Activated naive CD4-positive, alpha-beta T cell treated with anti-CD3 and anti-CD28 coated beads for 36 hours (primary cell): ENCODE measurements at regions of chr11 and their contacts with region 1.

Region 1: GRCh38 chr11:13289081-13289480 is 11.5 kb downstream of the BMAL1 start:
- DNase-seq: no peak
- H3K4me3 Mint-ChIP-seq: no peak overlapping the region
- H3K27ac Mint-ChIP-seq: no peak overlapping the region
- H3K4me1 Mint-ChIP-seq: peaks cover 76% of the 10 kb centered on the region
- H3K27me3 Mint-ChIP-seq: no peaks in the 10 kb centered on the region

Region 2: GRCh38 chr11:12813371-12814225 is 475.5 kb before region 1 on chr11:
- CTCF ChIA-PET with region 1: no interaction called
- intact Hi-C with region 1: no loop called
- DNase-seq: no peak
- H3K4me3 Mint-ChIP-seq: no peak overlapping the region
- H3K27ac Mint-ChIP-seq: no peak overlapping the region
- H3K4me1 Mint-ChIP-seq: peaks cover 4% of the 10 kb centered on the region
- H3K27me3 Mint-ChIP-seq: peaks cover 50% of the 10 kb centered on the region

Region 3: DNA sequence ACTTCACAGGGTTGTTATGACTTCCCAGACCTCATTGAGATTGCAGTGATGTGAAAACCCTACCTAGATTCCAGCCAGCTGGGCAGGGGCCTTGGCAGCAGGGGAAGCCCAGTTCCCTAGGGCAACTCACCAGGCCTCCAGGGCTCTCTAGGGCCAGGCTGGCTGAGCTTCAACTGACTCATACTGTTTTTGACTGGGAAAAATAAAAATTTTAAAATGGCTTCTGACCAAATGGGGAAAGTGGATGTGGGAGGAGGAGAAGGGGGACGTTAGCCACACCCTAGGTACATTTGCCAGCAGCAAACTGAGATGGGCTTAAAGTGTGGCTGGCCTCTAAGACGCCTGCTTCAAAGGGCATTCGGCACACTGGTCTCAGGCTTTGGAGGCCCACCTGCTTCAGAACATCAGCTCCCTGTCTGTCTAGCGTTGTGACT is 27.5 kb after region 1 on chr11:
- CTCF ChIA-PET with region 1: no interaction called
- intact Hi-C with region 1: loop called (anchors 2 kb)
- DNase-seq: peak; percentile 26
- H3K4me3 Mint-ChIP-seq: no peak overlapping the region
- H3K27ac Mint-ChIP-seq: peak overlapping the region; percentile 33
- H3K4me1 Mint-ChIP-seq: peaks cover 68% of the 10 kb centered on the region
- H3K27me3 Mint-ChIP-seq: no peaks in the 10 kb centered on the region

Region 4: GRCh38 chr11:13335319-13335718 is 46.2 kb after region 1 on chr11:
- CTCF ChIA-PET with region 1: interaction called, 10 read pairs
- intact Hi-C with region 1: loop called (anchors 1 kb)
- DNase-seq: peak; percentile 86
- H3K4me3 Mint-ChIP-seq: no peak overlapping the region
- H3K27ac Mint-ChIP-seq: no peak overlapping the region
- H3K4me1 Mint-ChIP-seq: peaks cover 76% of the 10 kb centered on the region
- H3K27me3 Mint-ChIP-seq: no peaks in the 10 kb centered on the region